ENCODE measurements at regions of chr2 and their contacts with region 1.

Region 1: GRCh38 chr2:7567646-7568045 is 650.4 kb downstream of the RNF144A start:
- DNase-seq: peak; percentile 94
- H3K4me3 ChIP-seq: peak overlapping the region; percentile 31
- H3K27ac ChIP-seq: peak overlapping the region; percentile 80
- H3K4me1 ChIP-seq: peaks cover 33% of the 10 kb centered on the region
- CTCF ChIP-seq: peak; percentile 76

Region 2: GRCh38 chr2:7427293-7428060 is 140.2 kb before region 1 on chr2:
- CTCF ChIA-PET with region 1: interaction called, 12 read pairs
- POLR2A ChIA-PET with region 1: no interaction called
- intact Hi-C with region 1: loop called (anchors 1 kb)
- DNase-seq: peak; percentile 92
- H3K4me3 ChIP-seq: no peak overlapping the region
- H3K27ac ChIP-seq: no peak overlapping the region
- H3K4me1 ChIP-seq: peaks cover 48% of the 10 kb centered on the region
- CTCF ChIP-seq: peak; percentile 91

Region 3: DNA sequence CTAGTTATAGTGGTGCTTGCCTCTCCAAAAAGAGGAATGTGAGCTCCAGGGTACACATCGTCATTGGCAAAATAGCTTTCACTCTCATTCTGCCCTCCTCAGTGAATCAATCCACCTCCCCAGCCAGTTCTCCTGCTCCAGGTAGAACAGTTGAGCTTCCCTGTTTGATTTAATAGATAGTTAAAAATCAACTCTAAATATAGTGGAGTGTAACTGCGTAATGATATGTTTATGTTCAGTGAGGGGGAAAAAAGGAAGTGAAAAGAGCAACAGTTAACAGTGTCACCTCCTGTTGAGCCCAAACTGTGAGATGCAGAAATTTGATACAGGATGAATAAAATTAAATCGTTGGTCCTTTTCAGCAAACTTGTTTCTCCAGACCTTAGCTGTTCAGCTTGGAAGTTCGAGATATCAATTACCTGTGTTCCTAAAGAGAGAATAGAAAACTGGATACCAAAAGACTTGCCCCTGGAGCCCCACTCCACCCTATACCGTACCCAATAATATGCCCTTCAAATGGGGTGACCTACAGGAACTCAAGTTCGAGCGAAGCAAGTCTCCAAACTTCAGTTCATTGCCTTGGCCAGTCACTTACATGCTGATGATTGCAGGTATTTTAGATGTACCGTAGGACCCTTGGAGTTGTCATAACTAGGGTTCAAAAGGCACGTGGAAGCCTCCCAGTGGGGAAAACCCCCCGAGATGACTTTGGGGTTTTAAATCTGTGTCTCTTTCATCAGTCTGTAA is 57.9 kb after region 1 on chr2:
- CTCF ChIA-PET with region 1: interaction called, 5 read pairs
- POLR2A ChIA-PET with region 1: interaction called, 6 read pairs
- intact Hi-C with region 1: loop called (anchors 2 kb)
- DNase-seq: peak; percentile 83
- H3K4me3 ChIP-seq: peak overlapping the region; percentile 34
- H3K27ac ChIP-seq: peak overlapping the region; percentile 62
- H3K4me1 ChIP-seq: peaks cover 26% of the 10 kb centered on the region
- CTCF ChIP-seq: no peak

Region 4: DNA sequence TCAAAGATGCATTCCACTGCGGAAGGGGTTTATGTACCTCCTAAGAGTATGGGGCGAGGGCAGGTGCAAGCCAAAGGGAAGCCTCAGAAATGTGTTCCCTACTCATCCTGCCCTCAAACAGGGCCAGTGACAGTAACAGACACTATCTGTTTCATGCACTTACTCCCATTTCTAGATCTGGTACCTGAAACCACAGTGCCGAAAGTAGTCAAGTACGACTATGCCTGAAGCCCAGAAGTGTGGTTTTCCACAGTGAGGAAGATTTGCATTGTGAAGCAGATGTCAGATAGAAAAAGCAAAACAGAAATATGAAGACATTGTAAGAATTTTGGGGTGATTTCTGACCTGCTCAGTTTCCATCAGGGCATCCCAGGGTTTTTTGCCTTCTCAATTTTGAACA is 98.2 kb after region 1 on chr2:
- CTCF ChIA-PET with region 1: interaction called, 11 read pairs
- POLR2A ChIA-PET with region 1: interaction called, 4 read pairs
- intact Hi-C with region 1: loop called (anchors 2 kb)
- DNase-seq: peak; percentile 41
- H3K4me3 ChIP-seq: no peak overlapping the region
- H3K27ac ChIP-seq: no peak overlapping the region
- H3K4me1 ChIP-seq: peaks cover 21% of the 10 kb centered on the region
- CTCF ChIP-seq: no peak; the same call in 1 of the 2 replicates

Region 5: DNA sequence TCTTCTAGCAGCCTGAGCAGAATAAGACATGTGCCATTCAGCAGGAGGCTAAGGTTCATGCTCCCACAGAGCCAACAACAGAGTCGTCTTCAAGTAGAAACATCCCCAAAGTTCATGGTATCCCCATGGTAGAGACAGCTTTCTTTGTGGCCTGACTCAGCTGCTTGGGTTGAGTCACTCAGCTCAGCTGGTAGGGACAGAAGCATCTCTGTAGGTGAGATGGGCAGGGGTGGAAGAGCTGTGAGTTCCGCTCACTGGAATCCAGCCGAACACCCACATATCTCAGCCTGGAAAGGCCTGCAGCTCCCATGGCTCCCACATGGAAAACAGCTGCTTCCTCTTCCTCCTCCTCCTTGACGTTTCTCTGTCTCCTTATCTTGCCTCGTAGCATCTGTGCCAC is 142.3 kb after region 1 on chr2:
- CTCF ChIA-PET with region 1: no interaction called
- POLR2A ChIA-PET with region 1: no interaction called
- intact Hi-C with region 1: no loop called
- DNase-seq: no peak
- H3K4me3 ChIP-seq: no peak overlapping the region
- H3K27ac ChIP-seq: no peak overlapping the region
- H3K4me1 ChIP-seq: peaks cover 4% of the 10 kb centered on the region
- CTCF ChIP-seq: no peak

Region 6: GRCh38 chr2:7835693-7836680 is 268.3 kb after region 1 on chr2:
- CTCF ChIA-PET with region 1: no interaction called
- POLR2A ChIA-PET with region 1: no interaction called
- intact Hi-C with region 1: loop called (anchors 5 kb)
- DNase-seq: peak; percentile 96
- H3K4me3 ChIP-seq: peak overlapping the region; percentile 38
- H3K27ac ChIP-seq: peak overlapping the region; percentile 94
- H3K4me1 ChIP-seq: peaks cover 46% of the 10 kb centered on the region
- CTCF ChIP-seq: no peak